ENCODE measurements at regions of chr2 and their contacts with region 1.

Region 1: DNA sequence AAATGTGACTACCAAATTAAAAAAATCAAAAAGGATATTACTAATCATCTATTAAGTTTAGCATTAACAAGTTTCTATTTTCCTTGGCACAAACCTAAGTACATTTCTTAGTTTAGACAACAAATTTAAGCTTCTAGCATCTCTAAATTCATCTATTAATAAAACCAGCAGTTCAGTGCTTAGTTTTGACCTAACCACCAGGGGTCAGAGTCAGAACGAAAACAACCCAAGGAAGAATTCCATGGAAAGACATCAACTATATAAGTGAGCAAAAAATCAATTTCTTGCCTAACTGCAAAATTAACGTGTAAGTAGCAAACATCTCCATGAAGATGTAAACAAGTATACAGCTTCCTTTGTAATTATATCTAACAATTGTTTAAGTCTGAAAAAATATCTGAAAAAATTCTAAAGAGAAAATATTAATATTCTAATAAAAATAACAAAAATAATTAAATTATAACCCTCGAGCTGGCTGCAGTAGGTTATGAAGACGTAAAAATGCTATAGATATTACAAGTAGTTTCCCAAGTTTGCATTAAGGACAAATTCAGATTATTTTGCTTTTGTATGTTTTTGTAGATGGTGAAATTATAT is 83.7 kb downstream of the CERKL start:
- DNase-seq: no peak
- ATAC-seq: peak; percentile 56; the same call in 1 of the 2 replicates
- H3K4me3 ChIP-seq: no peak overlapping the region
- H3K27ac ChIP-seq: no peak overlapping the region
- H3K4me1 ChIP-seq: no peaks in the 10 kb centered on the region
- H3K27me3 ChIP-seq: no peaks in the 10 kb centered on the region
- CTCF ChIP-seq: peak; percentile 67; the same call in 1 of the 2 replicates

Region 2: DNA sequence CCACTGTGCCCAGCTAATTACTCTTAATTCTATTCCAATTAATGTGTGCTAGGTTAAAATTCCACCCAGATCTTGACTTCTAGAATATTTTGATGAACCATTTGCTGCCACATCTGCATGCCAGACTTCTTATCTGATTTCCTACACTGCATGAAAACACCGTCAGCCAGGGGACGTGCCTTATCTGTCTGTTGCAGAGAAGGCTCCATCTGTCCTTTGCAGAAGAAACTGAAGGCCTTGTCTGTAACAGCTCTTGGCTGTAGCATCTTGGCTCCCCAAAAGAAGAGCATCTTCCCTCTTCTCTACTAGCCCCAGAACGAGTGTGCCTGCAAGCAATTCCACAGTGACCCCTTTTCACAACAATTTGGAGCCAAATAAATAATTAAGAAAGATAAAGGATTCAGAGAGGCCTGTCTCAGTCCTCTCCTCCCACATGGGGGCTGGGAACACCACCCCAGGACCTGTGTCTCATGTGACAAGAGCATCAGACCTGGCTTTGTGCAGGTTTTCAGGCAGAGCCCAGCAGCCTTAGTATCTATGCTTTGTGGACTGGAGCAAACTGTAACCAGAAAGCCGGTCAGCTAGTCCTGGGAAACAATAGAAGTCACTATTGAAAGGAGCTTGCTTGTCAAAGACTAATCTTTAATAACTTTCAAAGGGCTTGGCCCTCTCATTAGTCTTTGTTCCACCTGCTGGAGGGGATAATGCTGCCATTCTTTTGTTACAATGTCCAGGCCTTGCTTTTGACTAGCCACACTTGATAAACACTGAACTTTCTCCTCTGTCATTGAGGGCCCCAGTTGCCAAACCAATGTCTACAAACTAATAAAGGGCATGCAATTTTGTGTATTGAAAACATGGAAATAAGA is 191.1 kb after region 1 on chr2:
- CTCF ChIA-PET with region 1: no interaction called
- POLR2A ChIA-PET with region 1: no interaction called
- in situ Hi-C with region 1: no loop called
- intact Hi-C with region 1: no loop called
- DNase-seq: no peak
- ATAC-seq: no peak
- H3K4me3 ChIP-seq: no peak overlapping the region
- H3K27ac ChIP-seq: no peak overlapping the region; the same call in 1 of the 2 replicates
- H3K4me1 ChIP-seq: no peaks in the 10 kb centered on the region
- H3K27me3 ChIP-seq: no peaks in the 10 kb centered on the region
- CTCF ChIP-seq: no peak

Region 3: DNA sequence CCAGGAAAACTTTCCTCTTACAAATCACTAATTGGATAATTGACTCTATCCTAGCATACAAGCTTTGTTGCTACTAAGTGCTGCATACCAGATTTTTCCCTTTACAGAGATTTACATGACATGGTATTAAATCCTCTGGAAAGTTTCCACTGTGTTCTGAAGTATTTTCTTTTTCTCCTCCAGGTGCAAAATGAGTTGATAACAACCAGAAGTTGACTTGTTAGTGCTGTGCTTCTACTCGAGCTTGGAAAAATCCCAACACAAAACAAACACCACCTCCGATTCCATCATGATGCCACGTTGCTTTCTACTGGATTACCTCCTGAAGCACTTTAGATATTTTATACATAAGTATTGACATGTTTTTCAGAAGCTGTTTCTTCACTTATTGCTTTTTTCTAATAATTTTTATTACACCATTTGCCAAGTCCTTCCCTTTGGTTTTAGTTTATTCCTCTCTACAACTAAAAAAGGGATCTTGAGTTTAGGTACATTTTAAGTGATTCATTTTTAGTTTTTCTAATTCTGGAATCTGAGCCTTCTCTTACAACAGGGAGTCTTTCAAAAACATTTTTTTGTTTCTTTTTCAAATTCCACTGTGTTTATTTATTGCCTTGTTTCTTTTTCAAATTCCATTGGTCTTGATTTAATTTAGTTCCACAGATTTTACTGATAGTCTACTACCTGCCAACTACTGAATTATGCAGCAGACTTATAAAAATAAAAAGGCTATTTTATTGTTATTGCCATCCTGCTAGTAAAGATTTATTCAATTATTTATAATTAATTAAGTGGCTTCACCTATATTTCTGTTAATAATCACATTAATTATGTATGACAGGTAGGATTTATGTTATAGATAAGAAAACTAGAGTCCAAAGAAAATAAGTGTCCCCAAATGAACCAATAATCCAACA is 555.8 kb after region 1 on chr2:
- CTCF ChIA-PET with region 1: no interaction called
- POLR2A ChIA-PET with region 1: no interaction called
- in situ Hi-C with region 1: no loop called
- intact Hi-C with region 1: loop called (anchors 10 kb)
- DNase-seq: no peak
- ATAC-seq: no peak
- H3K4me3 ChIP-seq: no peak overlapping the region
- H3K27ac ChIP-seq: no peak overlapping the region
- H3K4me1 ChIP-seq: no peaks in the 10 kb centered on the region
- H3K27me3 ChIP-seq: no peaks in the 10 kb centered on the region
- CTCF ChIP-seq: no peak